GM10248 (cell line): ENCODE measurements at regions of chr15 and their contacts with region 1.

Region 1: DNA sequence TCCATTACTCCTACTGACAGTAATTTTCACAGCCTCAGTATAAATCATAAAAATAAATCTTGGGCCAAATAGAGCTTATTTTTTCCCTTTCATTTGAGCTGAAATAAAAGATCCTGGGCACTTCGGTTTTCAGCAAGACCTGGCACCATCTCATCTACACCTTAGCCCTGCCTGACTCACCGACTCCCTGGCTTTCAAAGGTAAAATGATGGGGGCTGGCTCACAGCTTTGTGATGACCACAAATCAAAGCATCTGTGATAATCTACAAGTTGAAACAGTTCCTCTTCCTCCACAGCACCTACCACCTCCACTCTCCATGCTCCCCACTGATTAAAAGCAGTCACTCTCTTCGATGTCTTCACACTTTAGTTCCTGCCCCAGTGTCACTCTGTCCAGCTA is 27.6 kb downstream of the DET1 start:
- DNase-seq: no peak
- CTCF ChIP-seq: no peak

Region 2: GRCh38 chr15:88529021-88529630 is 10.2 kb after region 1 on chr15:
- CTCF ChIA-PET with region 1: interaction called, 15 read pairs
- POLR2A ChIA-PET with region 1: no interaction called
- DNase-seq: no peak
- CTCF ChIP-seq: no peak